ENCODE measurements at regions of chr3 and their contacts with region 1.

Region 1: GRCh38 chr3:172106989-172107388 is 67.6 kb downstream of the FNDC3B start:
- DNase-seq: peak; percentile 68
- H3K4me3 Mint-ChIP-seq: peak overlapping the region; percentile 82
- H3K27ac Mint-ChIP-seq: peak overlapping the region; percentile 91
- H3K4me1 Mint-ChIP-seq: peaks cover 77% of the 10 kb centered on the region
- H3K27me3 Mint-ChIP-seq: no peaks in the 10 kb centered on the region

Region 2: GRCh38 chr3:171585029-171585428 is 522.0 kb before region 1 on chr3:
- intact Hi-C with region 1: no loop called
- DNase-seq: no peak
- H3K4me3 Mint-ChIP-seq: no peak overlapping the region
- H3K27ac Mint-ChIP-seq: no peak overlapping the region
- H3K4me1 Mint-ChIP-seq: no peaks in the 10 kb centered on the region
- H3K27me3 Mint-ChIP-seq: no peaks in the 10 kb centered on the region

Region 3: DNA sequence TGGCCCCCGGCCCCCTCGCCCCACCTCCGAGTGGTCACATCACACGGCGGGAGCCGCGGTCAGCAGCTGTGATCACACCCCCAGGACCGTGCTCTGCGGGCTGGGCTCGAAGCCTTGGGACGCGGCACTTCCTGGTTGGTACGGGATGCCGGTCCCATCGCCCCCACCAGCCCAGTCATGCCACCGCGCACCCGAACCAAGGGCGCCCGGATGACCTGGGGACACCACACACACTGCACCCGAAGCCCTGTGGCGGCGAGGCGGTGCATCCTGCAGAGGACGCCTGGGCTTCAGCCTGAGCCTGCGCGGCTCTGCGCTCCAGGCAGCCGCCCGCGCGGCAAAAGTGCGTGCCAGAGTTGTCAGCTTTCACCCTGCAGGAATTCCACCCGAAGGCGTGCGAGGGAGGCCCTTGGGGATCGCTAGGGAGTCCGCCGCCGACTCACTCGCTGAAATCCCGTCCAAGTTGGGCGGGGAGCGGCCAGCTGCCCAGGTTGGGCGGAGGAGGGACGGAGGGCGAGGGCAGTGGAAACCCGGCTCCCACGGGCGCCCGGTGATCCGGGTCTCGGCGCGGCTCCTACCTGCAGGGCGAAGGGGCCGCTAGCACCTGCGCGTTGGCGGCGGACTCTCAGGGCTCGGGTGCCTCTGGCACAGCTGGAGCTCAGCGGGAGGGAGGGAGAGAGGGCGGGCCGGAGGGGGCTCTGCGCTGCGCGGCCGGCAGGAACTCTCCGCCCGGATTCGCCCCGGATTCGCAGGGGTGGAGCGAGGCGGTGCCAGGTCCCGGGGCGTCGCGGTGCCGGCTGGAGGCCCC is 297.0 kb before region 1 on chr3 and contains the start of gene PLD1:
- intact Hi-C with region 1: loop called (anchors 5 kb)
- DNase-seq: peak; percentile 27
- H3K4me3 Mint-ChIP-seq: peak within 1 kb of the TSS; percentile 83
- H3K27ac Mint-ChIP-seq: no peak within 1 kb of the TSS
- H3K4me1 Mint-ChIP-seq: peaks cover 22% of the 10 kb centered on the region
- H3K27me3 Mint-ChIP-seq: peaks cover 53% of the 10 kb centered on the region
- total RNA-seq, gene PLD1: 0.15 and 0.29 TPM in 2 replicates

Region 4: GRCh38 chr3:172039436-172040077 is 67.4 kb before region 1 on chr3 and contains the start of gene FNDC3B:
- intact Hi-C with region 1: loop called (anchors 1 kb)
- DNase-seq: peak; percentile 89
- H3K4me3 Mint-ChIP-seq: peak within 1 kb of the TSS; percentile 99
- H3K27ac Mint-ChIP-seq: peak within 1 kb of the TSS; percentile 99
- H3K4me1 Mint-ChIP-seq: peaks cover 31% of the 10 kb centered on the region
- H3K27me3 Mint-ChIP-seq: peaks cover 13% of the 10 kb centered on the region
- total RNA-seq, gene FNDC3B: 29.0 and 31.5 TPM in 2 replicates

Region 5: GRCh38 chr3:172094621-172095557 is 12.1 kb before region 1 on chr3:
- intact Hi-C with region 1: loop called (anchors 1 kb)
- DNase-seq: peak; percentile 25
- H3K4me3 Mint-ChIP-seq: no peak overlapping the region
- H3K27ac Mint-ChIP-seq: peak overlapping the region; percentile 63
- H3K4me1 Mint-ChIP-seq: peaks cover 69% of the 10 kb centered on the region
- H3K27me3 Mint-ChIP-seq: peaks cover 2% of the 10 kb centered on the region

Region 6: GRCh38 chr3:172332256-172333041 is 225.5 kb after region 1 on chr3:
- intact Hi-C with region 1: loop called (anchors 5 kb)
- DNase-seq: peak; percentile 43
- H3K4me3 Mint-ChIP-seq: no peak overlapping the region
- H3K27ac Mint-ChIP-seq: no peak overlapping the region
- H3K4me1 Mint-ChIP-seq: no peaks in the 10 kb centered on the region
- H3K27me3 Mint-ChIP-seq: no peaks in the 10 kb centered on the region

Region 7: GRCh38 chr3:172616031-172616461 is 509.1 kb after region 1 on chr3:
- intact Hi-C with region 1: loop called (anchors 1 kb)
- DNase-seq: no peak
- H3K4me3 Mint-ChIP-seq: peak overlapping the region; percentile 49
- H3K27ac Mint-ChIP-seq: peak overlapping the region; percentile 90
- H3K4me1 Mint-ChIP-seq: peaks cover 31% of the 10 kb centered on the region
- H3K27me3 Mint-ChIP-seq: no peaks in the 10 kb centered on the region